Activated CD4-positive, alpha-beta T cell treated with anti-CD3 and anti-CD28 coated beads for 36 hours (primary cell): ENCODE measurements at regions of chrX and their contacts with region 1.

Region 1: GRCh38 chrX:47637546-47638195 is 7.9 kb upstream of the CFP start:
- DNase-seq: peak; percentile 69
- ATAC-seq: peak; percentile 73
- H3K4me3 Mint-ChIP-seq: peak overlapping the region; percentile 55
- H3K27ac Mint-ChIP-seq: peak overlapping the region; percentile 72
- H3K4me1 Mint-ChIP-seq: peaks cover 27% of the 10 kb centered on the region
- H3K27me3 Mint-ChIP-seq: no peaks in the 10 kb centered on the region

Region 2: DNA sequence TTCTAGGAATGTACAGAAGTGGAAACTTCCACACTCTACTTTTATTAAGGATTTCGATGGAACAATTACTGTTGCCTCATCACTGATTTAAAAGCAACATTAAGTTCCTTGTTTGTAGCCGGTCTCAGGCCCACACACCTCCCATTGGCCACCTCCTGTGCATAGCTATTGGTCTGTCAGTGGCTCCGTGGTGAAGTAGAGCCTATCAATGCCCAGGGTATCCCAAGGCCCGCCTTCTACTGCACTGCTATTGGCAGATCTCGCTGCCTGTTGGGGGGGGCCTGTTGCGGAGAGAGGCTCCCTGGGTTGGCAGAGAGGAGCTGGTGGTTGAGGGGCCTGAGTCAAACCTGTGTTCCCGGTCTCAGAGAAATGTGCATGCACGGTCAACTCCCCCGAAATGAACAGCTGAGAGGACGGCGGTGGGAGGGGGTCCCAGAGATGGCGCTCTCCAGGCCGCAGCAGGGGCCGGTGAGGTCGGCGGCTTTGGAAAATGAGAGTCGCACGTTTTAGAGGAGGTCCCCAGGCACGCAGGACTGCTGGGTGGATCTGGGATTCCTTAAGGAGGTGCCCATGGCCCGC is 81.5 kb before region 1 on chrX:
- CTCF ChIA-PET with region 1: no interaction called
- POLR2A ChIA-PET with region 1: no interaction called
- intact Hi-C with region 1: no loop called
- DNase-seq: peak; percentile 90
- ATAC-seq: peak; percentile 90
- H3K4me3 Mint-ChIP-seq: peak overlapping the region; percentile 83
- H3K27ac Mint-ChIP-seq: peak overlapping the region; percentile 93
- H3K4me1 Mint-ChIP-seq: peaks cover 14% of the 10 kb centered on the region
- H3K27me3 Mint-ChIP-seq: no peaks in the 10 kb centered on the region

Region 3: GRCh38 chrX:47650164-47651042 is 12.7 kb after region 1 on chrX and contains the start of gene ELK1:
- CTCF ChIA-PET with region 1: no interaction called
- POLR2A ChIA-PET with region 1: interaction called, 3 read pairs
- intact Hi-C with region 1: loop called in 1 of 2 experiments (anchors 1 kb)
- DNase-seq: peak; percentile 93
- ATAC-seq: peak; percentile 95
- H3K4me3 Mint-ChIP-seq: peak within 1 kb of the TSS; percentile 92
- H3K27ac Mint-ChIP-seq: peak within 1 kb of the TSS; percentile 97
- H3K4me1 Mint-ChIP-seq: peaks cover 44% of the 10 kb centered on the region
- H3K27me3 Mint-ChIP-seq: no peaks in the 10 kb centered on the region
- total RNA-seq, gene ELK1: 96.8 to 117 TPM